ENCODE measurements at regions of chr10 and their contacts with region 1.

Region 1: GRCh38 chr10:93080350-93081046 is 6.8 kb downstream of the CYP26A1 start:
- DNase-seq: peak; percentile 70
- H3K4me3 Mint-ChIP-seq: no peak overlapping the region
- H3K27ac Mint-ChIP-seq: no peak overlapping the region
- H3K4me1 Mint-ChIP-seq: peaks cover 6% of the 10 kb centered on the region
- H3K27me3 Mint-ChIP-seq: peaks cover 38% of the 10 kb centered on the region

Region 2: GRCh38 chr10:93068411-93069244 is 11.9 kb before region 1 on chr10:
- CTCF ChIA-PET with region 1: interaction called, 13 read pairs
- intact Hi-C with region 1: no loop called
- DNase-seq: no peak
- H3K4me3 Mint-ChIP-seq: no peak overlapping the region
- H3K27ac Mint-ChIP-seq: no peak overlapping the region
- H3K4me1 Mint-ChIP-seq: peaks cover 25% of the 10 kb centered on the region
- H3K27me3 Mint-ChIP-seq: peaks cover 83% of the 10 kb centered on the region

Region 3: DNA sequence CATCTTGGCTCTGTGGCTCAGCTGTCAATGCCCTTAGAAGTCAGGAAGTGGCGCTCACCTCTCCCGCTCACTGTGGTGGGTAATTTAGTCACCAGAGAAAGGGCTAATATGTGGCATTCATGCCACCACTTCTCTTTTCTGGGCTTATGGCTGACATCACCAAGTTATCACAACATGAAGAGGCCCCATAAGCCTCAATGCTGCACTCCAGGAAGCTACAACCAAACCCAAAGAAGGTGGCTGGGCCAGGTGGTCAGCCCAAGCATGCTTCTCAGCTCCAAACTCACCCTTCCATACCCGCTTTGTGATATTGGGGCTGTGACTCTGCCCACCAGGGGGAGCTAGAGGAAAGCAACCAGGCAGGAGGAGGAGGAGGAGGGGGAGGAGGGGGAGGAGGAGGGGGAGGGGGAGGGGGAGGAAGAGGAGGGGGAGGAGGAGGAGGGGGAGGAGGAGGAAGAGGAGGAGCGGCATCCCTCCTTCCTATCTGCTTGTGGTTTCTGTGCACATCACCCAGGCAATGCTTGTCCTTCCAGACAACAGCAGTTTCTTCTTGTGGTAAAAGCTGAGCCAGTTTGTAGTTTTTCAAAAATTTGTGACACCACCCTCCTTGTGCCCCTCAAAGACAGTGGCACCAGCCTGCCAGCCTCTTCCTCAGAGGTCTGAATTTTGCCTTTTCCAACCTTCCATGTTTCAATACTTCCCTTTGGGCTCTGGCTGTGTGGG is 35.3 kb after region 1 on chr10:
- CTCF ChIA-PET with region 1: interaction called, 7 read pairs
- intact Hi-C with region 1: loop called (anchors 2 kb)
- DNase-seq: peak; percentile 86
- H3K4me3 Mint-ChIP-seq: no peak overlapping the region
- H3K27ac Mint-ChIP-seq: no peak overlapping the region
- H3K4me1 Mint-ChIP-seq: peaks cover 11% of the 10 kb centered on the region
- H3K27me3 Mint-ChIP-seq: no peaks in the 10 kb centered on the region

Region 4: GRCh38 chr10:93288654-93289634 is 208.4 kb after region 1 on chr10:
- CTCF ChIA-PET with region 1: interaction called, 4 read pairs
- intact Hi-C with region 1: loop called (anchors 1 kb)
- DNase-seq: peak; percentile 73
- H3K4me3 Mint-ChIP-seq: no peak overlapping the region
- H3K27ac Mint-ChIP-seq: peak overlapping the region; percentile 10
- H3K4me1 Mint-ChIP-seq: no peaks in the 10 kb centered on the region
- H3K27me3 Mint-ChIP-seq: no peaks in the 10 kb centered on the region

Measured in activated naive CD4-positive, alpha-beta T cell treated with anti-CD3 and anti-CD28 coated beads for 36 hours (primary cell).